ENCODE measurements at regions of chr5 and their contacts with region 1.

Region 1: GRCh38 chr5:36305571-36306326 is 4.0 kb upstream of the RANBP3L start:
- DNase-seq: peak in 1 of 2 experiments; percentile 59
- H3K4me3 ChIP-seq: no peak overlapping the region
- H3K4me3 Mint-ChIP-seq: no peak overlapping the region
- H3K27ac Mint-ChIP-seq: no peak overlapping the region
- H3K4me1 ChIP-seq: peaks cover 19% of the 10 kb centered on the region
- H3K4me1 Mint-ChIP-seq: peaks cover 13% of the 10 kb centered on the region
- H3K27me3 ChIP-seq: no peaks in the 10 kb centered on the region
- H3K27me3 Mint-ChIP-seq: no peaks in the 10 kb centered on the region
- CTCF ChIP-seq: peak; percentile 55 to 72

Region 2: DNA sequence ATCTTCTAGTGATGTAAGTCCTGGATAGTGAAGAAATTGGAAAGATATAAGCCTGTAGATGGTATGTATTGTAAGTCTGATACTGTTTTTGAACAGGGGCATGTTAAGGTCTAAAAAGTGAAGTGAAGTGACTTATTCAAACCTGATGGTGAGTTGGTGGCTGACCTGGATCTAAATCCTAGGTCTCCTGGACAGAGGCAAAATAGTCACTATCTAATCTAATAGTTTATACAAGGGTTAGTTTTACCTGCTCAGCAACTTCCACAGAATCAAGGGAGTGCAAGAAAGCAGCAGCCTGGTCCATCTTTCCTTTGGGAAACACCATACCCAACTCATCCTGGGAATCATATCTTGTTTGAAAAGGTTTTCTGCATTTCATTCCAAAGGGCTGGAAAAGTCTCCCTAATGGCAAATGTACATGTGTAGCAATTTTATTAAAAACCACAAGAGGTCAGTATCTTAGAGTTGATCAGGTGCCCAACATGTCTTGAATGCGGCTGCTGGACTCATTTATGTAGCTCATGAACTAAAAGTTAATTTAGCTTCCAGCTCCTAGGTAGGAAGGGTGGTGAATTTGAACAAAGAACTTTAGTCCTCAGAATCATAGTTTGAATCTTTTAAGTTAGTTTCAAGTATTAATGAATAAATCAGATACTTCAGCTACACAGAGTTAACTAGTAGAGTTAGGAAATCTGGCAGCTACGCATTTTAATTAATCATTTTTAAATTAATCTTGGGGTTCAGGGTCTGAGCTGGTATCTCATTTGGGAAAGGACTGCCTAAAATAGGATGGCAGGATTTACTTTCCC is 127.8 kb before region 1 on chr5:
- CTCF ChIA-PET with region 1: interaction called, 4 read pairs
- POLR2A ChIA-PET with region 1: no interaction called
- intact Hi-C with region 1: loop called (anchors 1 kb)
- DNase-seq: peak in 1 of 2 experiments; percentile 24
- H3K4me3 ChIP-seq: no peak overlapping the region
- H3K4me3 Mint-ChIP-seq: no peak overlapping the region
- H3K27ac Mint-ChIP-seq: no peak overlapping the region
- H3K4me1 ChIP-seq: peaks cover 27% of the 10 kb centered on the region
- H3K4me1 Mint-ChIP-seq: peaks cover 44% of the 10 kb centered on the region
- H3K27me3 ChIP-seq: no peaks in the 10 kb centered on the region
- H3K27me3 Mint-ChIP-seq: no peaks in the 10 kb centered on the region
- CTCF ChIP-seq: peak; percentile 50 to 61

Region 3: DNA sequence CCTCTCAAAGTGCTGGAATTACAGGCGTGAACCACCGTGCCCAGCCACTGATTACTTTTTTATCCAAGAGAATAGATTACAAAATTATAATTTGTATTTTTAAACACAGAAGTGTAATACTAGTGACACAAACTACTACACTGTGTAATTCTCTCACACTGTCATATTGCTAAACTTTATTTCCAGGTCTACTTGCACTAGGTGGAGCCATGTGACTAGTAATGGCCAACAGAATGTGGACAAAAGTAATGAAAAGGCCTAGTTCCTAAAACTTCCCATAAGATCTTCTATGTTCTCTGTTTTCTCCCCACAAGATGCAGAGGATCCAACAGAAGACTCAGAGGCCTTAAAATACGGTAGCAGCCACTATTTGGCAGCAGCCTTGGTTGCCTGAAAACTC is 91.3 kb before region 1 on chr5:
- CTCF ChIA-PET with region 1: no interaction called
- POLR2A ChIA-PET with region 1: no interaction called
- intact Hi-C with region 1: loop called (anchors 1 kb)
- DNase-seq: peak in 1 of 2 experiments; percentile 27
- H3K4me3 ChIP-seq: no peak overlapping the region
- H3K4me3 Mint-ChIP-seq: no peak overlapping the region
- H3K27ac Mint-ChIP-seq: no peak overlapping the region
- H3K4me1 ChIP-seq: no peaks in the 10 kb centered on the region; the same call in 1 of the 2 replicates
- H3K4me1 Mint-ChIP-seq: peaks cover 8% of the 10 kb centered on the region
- H3K27me3 ChIP-seq: no peaks in the 10 kb centered on the region
- H3K27me3 Mint-ChIP-seq: no peaks in the 10 kb centered on the region
- CTCF ChIP-seq: peak in 1 of 2 experiments; percentile 22

Region 4: GRCh38 chr5:36264202-36264760 is 41.5 kb before region 1 on chr5:
- CTCF ChIA-PET with region 1: interaction called, 3 read pairs
- POLR2A ChIA-PET with region 1: interaction called, 5 read pairs
- intact Hi-C with region 1: loop called (anchors 1 kb)
- DNase-seq: no peak
- H3K4me3 ChIP-seq: no peak overlapping the region
- H3K4me3 Mint-ChIP-seq: no peak overlapping the region
- H3K27ac Mint-ChIP-seq: no peak overlapping the region
- H3K4me1 ChIP-seq: no peaks in the 10 kb centered on the region
- H3K4me1 Mint-ChIP-seq: no peaks in the 10 kb centered on the region
- H3K27me3 ChIP-seq: no peaks in the 10 kb centered on the region
- H3K27me3 Mint-ChIP-seq: no peaks in the 10 kb centered on the region
- CTCF ChIP-seq: no peak

Region 5: DNA sequence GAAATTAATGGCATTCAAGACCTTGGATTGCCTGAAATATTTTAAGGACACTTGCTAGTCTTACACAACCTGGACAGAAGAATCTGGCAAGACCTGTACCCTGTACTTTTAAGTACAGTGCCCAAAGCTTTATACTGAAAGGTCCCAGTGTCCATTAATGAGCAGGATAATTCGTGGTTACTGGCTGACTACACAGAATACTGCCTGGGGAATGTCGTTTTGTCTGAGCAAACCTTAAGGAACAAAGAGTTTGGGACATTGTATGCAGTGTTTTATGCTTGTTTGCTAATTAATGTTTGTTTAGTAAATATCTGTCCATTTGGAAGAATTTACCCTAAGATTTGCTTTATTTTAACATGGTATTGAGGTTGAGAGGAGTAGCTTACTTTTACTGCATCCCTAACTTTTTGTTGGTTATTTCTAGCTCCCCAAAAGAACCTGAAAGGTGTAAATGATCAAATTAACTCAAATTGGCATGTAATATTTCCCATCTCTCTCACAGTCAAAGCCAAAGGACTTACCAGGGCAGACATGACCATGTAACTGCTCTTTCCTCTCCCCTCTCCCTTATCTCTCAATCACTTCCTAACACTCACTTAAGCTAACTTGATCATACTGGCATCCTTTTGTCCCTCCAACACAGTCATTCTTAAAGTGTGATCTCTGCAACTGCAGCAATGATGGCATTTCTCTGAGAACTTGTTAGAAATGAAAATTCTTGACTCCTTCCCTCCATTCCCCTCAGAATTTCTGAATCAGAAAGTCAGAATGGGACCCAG is 19.7 kb before region 1 on chr5:
- CTCF ChIA-PET with region 1: no interaction called
- POLR2A ChIA-PET with region 1: no interaction called
- intact Hi-C with region 1: no loop called
- DNase-seq: no peak
- H3K4me3 ChIP-seq: no peak overlapping the region
- H3K4me3 Mint-ChIP-seq: no peak overlapping the region
- H3K27ac Mint-ChIP-seq: no peak overlapping the region
- H3K4me1 ChIP-seq: no peaks in the 10 kb centered on the region
- H3K4me1 Mint-ChIP-seq: peaks cover 7% of the 10 kb centered on the region
- H3K27me3 ChIP-seq: no peaks in the 10 kb centered on the region
- H3K27me3 Mint-ChIP-seq: no peaks in the 10 kb centered on the region
- CTCF ChIP-seq: no peak

Region 6: DNA sequence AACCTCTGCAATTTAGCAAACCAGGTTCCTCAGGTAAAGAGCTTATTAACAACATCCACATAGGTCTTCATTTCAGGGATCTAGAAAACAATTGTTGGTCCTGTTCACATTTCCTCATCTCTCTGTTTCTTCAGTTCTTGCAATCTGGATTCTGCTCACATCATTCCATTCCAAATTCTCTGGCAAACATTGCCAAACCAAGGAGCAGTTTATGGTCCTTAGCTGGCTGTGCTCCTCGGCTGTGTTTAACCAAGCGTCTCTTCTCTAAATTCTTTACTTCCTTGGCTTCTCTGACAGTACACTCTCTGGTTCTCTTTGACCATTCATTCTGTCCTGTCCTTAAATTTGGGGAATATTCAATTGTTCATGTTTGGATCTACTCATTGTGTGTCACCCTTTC is 61.8 kb after region 1 on chr5:
- CTCF ChIA-PET with region 1: interaction called, 3 read pairs
- POLR2A ChIA-PET with region 1: no interaction called
- intact Hi-C with region 1: loop called (anchors 5 kb)
- DNase-seq: peak in 1 of 2 experiments; percentile 51
- H3K4me3 ChIP-seq: no peak overlapping the region
- H3K4me3 Mint-ChIP-seq: no peak overlapping the region
- H3K27ac Mint-ChIP-seq: peak overlapping the region; percentile 1
- H3K4me1 ChIP-seq: peaks cover 21% of the 10 kb centered on the region
- H3K4me1 Mint-ChIP-seq: peaks cover 25% of the 10 kb centered on the region
- H3K27me3 ChIP-seq: no peaks in the 10 kb centered on the region
- H3K27me3 Mint-ChIP-seq: no peaks in the 10 kb centered on the region
- CTCF ChIP-seq: no peak

Measured in Caco-2 (cell line).